ENCODE measurements at regions of chr6 and their contacts with region 1.

Region 1: GRCh38 chr6:75208298-75209183 is 2.7 kb upstream of the COL12A1 start:
- DNase-seq: peak; percentile 77
- ATAC-seq: peak; percentile 39
- H3K4me3 ChIP-seq: no peak overlapping the region
- H3K27ac ChIP-seq: peak overlapping the region; percentile 50; the same call in 1 of the 2 replicates
- H3K4me1 ChIP-seq: peaks cover 15% of the 10 kb centered on the region
- H3K27me3 ChIP-seq: no peaks in the 10 kb centered on the region
- CTCF ChIP-seq: peak; percentile 95
- POLR2A ChIP-seq: peak; percentile 46; the same call in 1 of the 2 replicates
- RAD21 ChIP-seq: peak; percentile 96

Region 2: GRCh38 chr6:73739096-73739495 is 1469.4 kb before region 1 on chr6:
- CTCF ChIA-PET with region 1: interaction called, 4 read pairs
- POLR2A ChIA-PET with region 1: no interaction called
- dilution Hi-C with region 1: no loop called
- in situ Hi-C with region 1: loop called (anchors 5 kb)
- intact Hi-C with region 1: loop called (anchors 1 kb)
- DNase-seq: peak; percentile 78
- ATAC-seq: peak; percentile 78
- H3K4me3 ChIP-seq: no peak overlapping the region
- H3K27ac ChIP-seq: no peak overlapping the region
- H3K4me1 ChIP-seq: peaks cover 2% of the 10 kb centered on the region; the same call in 1 of the 2 replicates
- H3K27me3 ChIP-seq: no peaks in the 10 kb centered on the region
- CTCF ChIP-seq: peak; percentile 86
- POLR2A ChIP-seq: no peak
- RAD21 ChIP-seq: peak; percentile 92

Region 3: DNA sequence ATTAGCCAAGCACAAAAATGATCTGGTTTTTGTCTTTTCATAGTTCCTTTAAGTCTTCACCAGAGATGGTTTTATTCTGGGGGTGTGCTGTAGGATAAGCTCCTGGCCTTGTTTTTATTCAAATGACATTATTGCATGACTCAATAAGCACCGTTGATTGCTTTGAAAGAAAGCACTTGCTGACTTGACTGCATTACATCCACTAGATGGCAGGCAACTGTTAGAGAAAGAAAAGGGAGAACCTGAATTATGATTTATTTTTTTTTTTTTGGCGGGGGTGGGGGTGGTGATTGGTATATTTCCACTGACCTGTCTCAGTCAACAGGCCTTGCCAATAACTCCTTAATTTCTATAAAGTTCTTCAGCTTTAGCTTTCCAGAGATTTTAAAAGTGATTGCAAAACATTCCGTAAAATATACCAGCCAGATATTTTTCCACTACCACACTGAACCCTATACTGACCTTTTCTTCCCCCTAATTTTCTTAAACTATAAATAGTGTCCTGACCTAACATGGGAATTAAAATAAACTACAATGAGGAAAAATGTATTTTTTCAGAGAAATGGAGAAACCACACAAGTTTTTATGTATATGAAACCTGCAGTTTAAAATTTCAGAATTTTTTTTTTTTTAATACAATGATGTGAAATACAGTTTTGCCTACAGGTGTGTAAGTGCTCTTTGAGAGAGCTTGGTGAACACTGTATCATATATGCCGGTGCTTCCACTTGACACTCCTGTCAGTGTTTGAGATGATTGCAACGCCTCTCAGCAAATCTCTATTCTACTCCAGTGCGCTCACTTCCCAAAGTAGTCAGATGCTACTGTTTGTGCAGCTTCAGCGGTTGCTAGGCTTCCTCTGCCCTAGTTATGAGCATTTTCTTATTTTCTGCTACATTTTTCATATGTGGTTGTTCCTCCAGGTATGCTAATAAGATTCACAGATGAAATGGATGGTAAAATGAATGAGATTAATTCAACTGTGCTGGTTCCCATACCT is 1238.3 kb before region 1 on chr6:
- CTCF ChIA-PET with region 1: interaction called, 10 read pairs
- POLR2A ChIA-PET with region 1: no interaction called
- dilution Hi-C with region 1: no loop called
- in situ Hi-C with region 1: no loop called
- intact Hi-C with region 1: loop called (anchors 1 kb)
- DNase-seq: peak; percentile 67
- ATAC-seq: peak; percentile 66
- H3K4me3 ChIP-seq: no peak overlapping the region
- H3K27ac ChIP-seq: no peak overlapping the region
- H3K4me1 ChIP-seq: peaks cover 2% of the 10 kb centered on the region; the same call in 1 of the 2 replicates
- H3K27me3 ChIP-seq: no peaks in the 10 kb centered on the region
- CTCF ChIP-seq: peak; percentile 75
- POLR2A ChIP-seq: no peak
- RAD21 ChIP-seq: peak; percentile 68

Region 4: GRCh38 chr6:74277777-74278186 is 930.8 kb before region 1 on chr6:
- CTCF ChIA-PET with region 1: no interaction called
- POLR2A ChIA-PET with region 1: no interaction called
- dilution Hi-C with region 1: no loop called
- in situ Hi-C with region 1: no loop called
- intact Hi-C with region 1: loop called (anchors 5 kb)
- DNase-seq: peak; percentile 17
- ATAC-seq: peak; percentile 21
- H3K4me3 ChIP-seq: no peak overlapping the region
- H3K27ac ChIP-seq: peak overlapping the region; percentile 58; the same call in 1 of the 2 replicates
- H3K4me1 ChIP-seq: peaks cover 2% of the 10 kb centered on the region; the same call in 1 of the 2 replicates
- H3K27me3 ChIP-seq: no peaks in the 10 kb centered on the region
- CTCF ChIP-seq: no peak
- POLR2A ChIP-seq: no peak
- RAD21 ChIP-seq: no peak

Region 5: GRCh38 chr6:74585779-74586178 is 622.8 kb before region 1 on chr6:
- CTCF ChIA-PET with region 1: no interaction called
- POLR2A ChIA-PET with region 1: no interaction called
- dilution Hi-C with region 1: no loop called
- in situ Hi-C with region 1: no loop called
- intact Hi-C with region 1: no loop called
- DNase-seq: peak; percentile 53
- ATAC-seq: no peak
- H3K4me3 ChIP-seq: no peak overlapping the region
- H3K27ac ChIP-seq: no peak overlapping the region
- H3K4me1 ChIP-seq: no peaks in the 10 kb centered on the region
- H3K27me3 ChIP-seq: no peaks in the 10 kb centered on the region
- CTCF ChIP-seq: no peak
- POLR2A ChIP-seq: no peak
- RAD21 ChIP-seq: no peak

Region 6: DNA sequence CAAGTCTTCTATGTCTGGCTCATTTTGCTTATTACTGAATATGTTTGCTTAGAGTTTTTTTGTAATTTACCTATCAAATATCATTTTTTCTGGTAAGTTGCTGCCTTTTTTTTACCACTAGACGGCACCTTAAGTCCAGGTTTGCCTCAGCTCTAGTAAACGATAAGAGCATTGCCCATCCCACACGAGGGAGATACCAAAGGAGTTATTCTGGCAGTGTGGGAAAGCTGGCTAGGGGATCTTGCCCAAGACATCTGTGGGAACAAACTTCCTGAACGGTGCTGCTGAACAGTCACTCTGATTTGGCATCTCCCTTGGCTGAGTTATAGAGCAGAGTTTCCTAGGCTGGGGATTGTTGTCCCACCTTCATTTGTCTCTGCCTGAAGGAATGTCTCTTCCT is 309.1 kb before region 1 on chr6:
- CTCF ChIA-PET with region 1: no interaction called
- POLR2A ChIA-PET with region 1: no interaction called
- dilution Hi-C with region 1: no loop called
- in situ Hi-C with region 1: no loop called
- intact Hi-C with region 1: loop called (anchors 10 kb)
- DNase-seq: peak; percentile 64
- ATAC-seq: no peak
- H3K4me3 ChIP-seq: no peak overlapping the region
- H3K27ac ChIP-seq: no peak overlapping the region
- H3K4me1 ChIP-seq: no peaks in the 10 kb centered on the region
- H3K27me3 ChIP-seq: no peaks in the 10 kb centered on the region
- CTCF ChIP-seq: peak; percentile 40
- POLR2A ChIP-seq: no peak
- RAD21 ChIP-seq: peak; percentile 55

Region 7: GRCh38 chr6:75230484-75231325 is 22.2 kb after region 1 on chr6:
- CTCF ChIA-PET with region 1: interaction called, 10 read pairs
- POLR2A ChIA-PET with region 1: no interaction called
- dilution Hi-C with region 1: no loop called
- in situ Hi-C with region 1: no loop called
- intact Hi-C with region 1: loop called (anchors 1 kb)
- DNase-seq: peak; percentile 67
- ATAC-seq: peak; percentile 88
- H3K4me3 ChIP-seq: no peak overlapping the region
- H3K27ac ChIP-seq: no peak overlapping the region
- H3K4me1 ChIP-seq: 0 out of 2 replicates have a peak, but pooled peaks cover 1% of the 10 kb centered on the region
- H3K27me3 ChIP-seq: no peaks in the 10 kb centered on the region
- CTCF ChIP-seq: peak; percentile 80
- POLR2A ChIP-seq: no peak
- RAD21 ChIP-seq: peak; percentile 82

Region 8: GRCh38 chr6:75397656-75398465 is 189.3 kb after region 1 on chr6:
- CTCF ChIA-PET with region 1: no interaction called
- POLR2A ChIA-PET with region 1: no interaction called
- dilution Hi-C with region 1: no loop called
- in situ Hi-C with region 1: no loop called
- intact Hi-C with region 1: no loop called
- DNase-seq: peak; percentile 62
- ATAC-seq: peak; percentile 79
- H3K4me3 ChIP-seq: no peak overlapping the region
- H3K27ac ChIP-seq: peak overlapping the region; percentile 44; the same call in 1 of the 2 replicates
- H3K4me1 ChIP-seq: peaks cover 2% of the 10 kb centered on the region
- H3K27me3 ChIP-seq: no peaks in the 10 kb centered on the region
- CTCF ChIP-seq: no peak
- POLR2A ChIP-seq: no peak
- RAD21 ChIP-seq: no peak

Measured in IMR-90 (cell line).